ENCODE measurements at regions of chr1 and their contacts with region 1.

Region 1: GRCh38 chr1:43073490-43074230 is 98.4 kb downstream of the EBNA1BP2 start:
- DNase-seq: peak; percentile 73

Region 2: GRCh38 chr1:42777852-42778251 is 295.8 kb before region 1 on chr1:
- CTCF ChIA-PET with region 1: interaction called, 15 read pairs
- POLR2A ChIA-PET with region 1: no interaction called
- DNase-seq: peak; percentile 63

Region 3: DNA sequence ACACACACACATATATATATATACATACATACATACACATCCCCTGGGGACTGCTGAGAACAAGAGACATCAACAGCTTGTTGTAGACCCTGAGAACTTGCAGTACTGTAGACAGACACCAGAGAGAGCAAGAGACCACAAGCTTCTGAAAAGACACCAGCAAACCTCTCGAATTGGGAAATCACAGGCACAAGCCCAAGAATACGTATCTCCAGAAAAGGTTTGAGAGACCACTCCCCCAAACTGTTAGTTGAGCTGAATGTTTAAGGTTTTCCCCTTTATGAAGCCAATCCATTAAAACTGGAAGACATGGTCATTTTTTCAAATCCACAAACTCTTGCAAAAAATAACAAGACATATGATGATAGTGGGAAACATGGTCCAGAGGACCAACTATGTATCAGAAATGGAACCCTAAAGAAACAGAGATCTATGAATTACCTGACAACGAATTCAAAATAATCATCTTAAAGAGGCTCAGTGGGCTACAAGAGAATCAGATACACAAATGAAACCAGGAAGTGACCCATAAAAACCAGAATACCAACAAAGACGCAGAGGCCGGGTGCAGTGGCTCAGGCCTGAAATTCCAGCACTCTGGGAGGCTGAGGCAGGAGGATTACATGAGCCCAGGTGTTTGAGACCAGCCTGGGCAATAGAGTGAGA is 160.1 kb before region 1 on chr1:
- CTCF ChIA-PET with region 1: interaction called, 100 read pairs
- POLR2A ChIA-PET with region 1: interaction called, 6 read pairs
- DNase-seq: peak; percentile 74

Region 4: DNA sequence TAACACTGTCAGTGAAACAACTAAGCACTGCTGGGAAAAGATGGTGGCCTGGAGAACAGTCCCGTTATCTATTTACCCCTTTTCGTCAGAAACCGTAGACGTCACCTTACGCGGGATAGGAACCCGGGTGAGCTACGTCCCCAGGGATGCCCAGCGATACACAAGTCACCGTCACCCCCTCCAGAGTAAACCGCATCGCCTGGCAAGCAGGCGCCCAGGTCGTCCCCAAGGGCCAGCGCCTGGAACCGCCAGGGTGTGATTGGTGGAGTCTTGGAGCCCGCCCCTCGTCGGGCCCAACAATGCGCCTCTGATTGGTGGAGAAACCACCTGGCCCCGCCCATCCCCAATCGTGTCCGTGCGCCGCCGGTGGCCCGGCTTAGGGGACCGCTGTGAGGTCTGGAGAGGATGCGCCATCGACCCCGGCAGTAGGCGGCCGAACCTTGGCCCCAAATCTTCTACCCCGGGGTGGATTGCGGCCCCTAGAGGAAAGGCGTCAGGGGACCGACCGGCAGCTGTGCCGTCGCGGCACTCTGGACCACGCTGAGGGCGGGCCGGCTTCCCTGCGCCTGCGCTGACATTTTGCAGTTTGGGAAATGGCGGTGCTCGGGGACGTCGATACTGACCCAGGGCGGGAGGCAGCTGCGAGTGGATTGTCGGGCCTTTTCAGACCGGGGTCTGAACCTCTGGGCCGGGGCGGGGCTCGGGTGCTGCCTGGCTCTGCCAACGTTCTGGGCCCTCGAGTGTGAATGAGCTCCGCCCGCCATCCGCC is 149.4 kb before region 1 on chr1:
- CTCF ChIA-PET with region 1: interaction called, 50 read pairs
- POLR2A ChIA-PET with region 1: interaction called, 54 read pairs
- DNase-seq: peak; percentile 95

Region 5: GRCh38 chr1:43058545-43059355 is 14.9 kb before region 1 on chr1:
- CTCF ChIA-PET with region 1: interaction called, 15 read pairs
- POLR2A ChIA-PET with region 1: no interaction called
- DNase-seq: no peak

Measured in HEK293T (cell line).